ENCODE measurements at regions of chr10 and their contacts with region 1.

Region 1: DNA sequence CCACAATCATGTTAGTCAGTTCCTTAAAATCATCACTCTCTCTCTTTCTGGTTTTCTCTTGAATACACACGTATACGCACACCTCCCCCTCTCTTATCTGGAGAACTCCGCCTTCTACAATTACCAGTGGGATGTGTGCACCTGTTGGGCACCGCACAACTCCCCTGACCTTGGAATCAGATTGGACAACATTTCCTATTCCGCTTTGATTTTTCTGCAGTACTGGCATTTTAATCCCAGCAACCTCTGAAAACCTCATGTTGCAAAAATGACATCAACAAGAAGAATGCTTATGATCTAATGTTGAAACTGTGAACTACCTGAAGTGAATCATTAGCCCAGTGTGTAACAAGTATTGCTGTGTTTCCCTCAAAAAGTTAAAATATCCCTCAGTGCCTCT is 109.6 kb downstream of the KIAA1217 start:
- DNase-seq: no peak
- ATAC-seq: no peak
- H3K4me3 Mint-ChIP-seq: no peak overlapping the region
- H3K27ac Mint-ChIP-seq: no peak overlapping the region
- H3K4me1 Mint-ChIP-seq: peaks cover 6% of the 10 kb centered on the region
- H3K27me3 Mint-ChIP-seq: no peaks in the 10 kb centered on the region
- CTCF ChIP-seq: no peak

Region 2: GRCh38 chr10:24215196-24215595 is 103.3 kb before region 1 on chr10:
- CTCF ChIA-PET with region 1: no interaction called
- POLR2A ChIA-PET with region 1: no interaction called
- DNase-seq: no peak
- ATAC-seq: peak; percentile 29; the same call in 1 of the 2 replicates
- H3K4me3 Mint-ChIP-seq: no peak overlapping the region
- H3K27ac Mint-ChIP-seq: no peak overlapping the region; the same call in 1 of the 2 replicates
- H3K4me1 Mint-ChIP-seq: peaks cover 55% of the 10 kb centered on the region
- H3K27me3 Mint-ChIP-seq: no peaks in the 10 kb centered on the region
- CTCF ChIP-seq: no peak

Region 3: DNA sequence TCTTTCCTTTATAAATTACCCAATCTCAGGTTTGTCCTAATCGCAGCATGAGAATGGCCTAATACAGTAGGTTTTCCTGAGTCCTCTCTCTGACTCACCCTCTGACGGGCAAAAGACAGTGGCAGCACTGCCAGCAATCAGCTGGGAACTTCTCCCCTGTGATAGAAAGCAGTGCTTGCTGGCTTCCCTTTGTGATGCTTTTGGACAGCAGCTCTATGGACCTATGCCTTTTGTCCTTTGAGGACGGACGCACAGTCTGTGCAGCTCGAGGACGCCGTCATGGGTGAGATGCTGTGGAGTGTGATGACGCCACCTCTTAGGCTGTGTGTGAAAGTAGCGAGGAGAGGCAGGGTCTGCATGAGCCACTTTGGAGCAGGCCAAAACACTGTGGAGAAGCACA is 40.7 kb before region 1 on chr10:
- CTCF ChIA-PET with region 1: no interaction called
- POLR2A ChIA-PET with region 1: no interaction called
- DNase-seq: no peak
- ATAC-seq: no peak
- H3K4me3 Mint-ChIP-seq: no peak overlapping the region
- H3K27ac Mint-ChIP-seq: peak overlapping the region; percentile 78
- H3K4me1 Mint-ChIP-seq: peaks cover 5% of the 10 kb centered on the region; the same call in 1 of the 2 replicates
- H3K27me3 Mint-ChIP-seq: no peaks in the 10 kb centered on the region
- CTCF ChIP-seq: no peak

Region 4: DNA sequence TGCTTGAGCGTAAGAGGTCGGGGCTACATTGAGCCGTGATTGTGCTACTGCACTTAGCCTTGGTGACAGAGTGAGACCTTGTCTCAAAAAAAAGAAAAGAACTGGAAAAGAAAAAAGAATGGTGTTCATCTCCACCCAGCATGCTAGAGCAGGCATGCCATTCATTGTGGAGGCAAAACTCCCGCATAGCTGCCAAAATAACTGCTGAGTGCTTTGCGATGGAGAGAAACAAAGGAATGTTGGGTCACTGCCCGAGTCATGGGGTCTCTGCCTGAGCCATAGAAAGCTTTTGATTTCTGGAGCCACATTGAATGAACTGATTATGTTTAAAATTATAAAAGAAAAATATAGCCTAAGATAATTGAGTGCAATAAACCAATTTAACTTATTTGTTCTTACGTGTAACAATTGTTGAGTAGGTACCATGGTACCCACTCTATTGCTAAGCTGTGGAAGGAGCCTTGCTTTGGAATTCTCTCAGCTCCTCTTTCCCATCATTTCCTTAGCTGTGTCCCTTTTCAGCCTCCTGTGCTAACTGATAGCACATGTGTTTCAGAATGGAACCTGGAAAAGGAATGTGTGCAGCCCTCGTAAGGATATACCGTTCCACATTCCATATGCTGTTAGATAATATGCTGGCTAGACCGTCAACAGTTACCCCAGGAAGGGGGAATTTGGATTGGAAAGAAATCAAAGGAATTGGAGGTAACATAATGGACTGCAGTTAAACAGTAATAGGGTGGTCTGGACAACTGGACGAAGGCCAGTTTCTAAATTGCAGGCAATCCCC is 10.6 kb before region 1 on chr10:
- CTCF ChIA-PET with region 1: interaction called, 16 read pairs
- POLR2A ChIA-PET with region 1: no interaction called
- DNase-seq: no peak
- ATAC-seq: no peak
- H3K4me3 Mint-ChIP-seq: no peak overlapping the region
- H3K27ac Mint-ChIP-seq: no peak overlapping the region
- H3K4me1 Mint-ChIP-seq: peaks cover 24% of the 10 kb centered on the region
- H3K27me3 Mint-ChIP-seq: no peaks in the 10 kb centered on the region
- CTCF ChIP-seq: no peak

Region 5: DNA sequence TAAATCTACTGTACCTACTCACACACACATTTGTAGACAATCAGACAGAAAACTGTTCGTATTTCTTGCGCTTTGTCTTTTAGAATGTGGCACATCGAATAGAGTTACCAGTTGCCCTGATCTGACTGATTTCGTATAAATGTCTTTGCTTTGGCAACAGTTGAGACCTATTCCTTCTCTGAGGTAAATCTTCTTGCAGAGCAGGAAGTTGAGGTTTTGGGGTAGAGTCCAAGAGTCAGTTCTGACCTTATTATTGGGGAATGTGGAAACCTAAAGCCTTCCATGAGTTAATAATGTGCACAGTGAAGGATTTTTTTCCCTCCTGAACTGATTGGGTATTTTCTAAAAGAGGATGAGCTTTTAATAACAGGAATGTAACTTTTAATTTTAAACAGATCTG is 25.8 kb after region 1 on chr10:
- CTCF ChIA-PET with region 1: no interaction called
- POLR2A ChIA-PET with region 1: no interaction called
- DNase-seq: no peak
- ATAC-seq: no peak
- H3K4me3 Mint-ChIP-seq: no peak overlapping the region
- H3K27ac Mint-ChIP-seq: no peak overlapping the region
- H3K4me1 Mint-ChIP-seq: peaks cover 24% of the 10 kb centered on the region
- H3K27me3 Mint-ChIP-seq: no peaks in the 10 kb centered on the region
- CTCF ChIP-seq: no peak

Region 6: GRCh38 chr10:24456322-24456721 is 137.8 kb after region 1 on chr10:
- CTCF ChIA-PET with region 1: no interaction called
- POLR2A ChIA-PET with region 1: no interaction called
- DNase-seq: no peak
- ATAC-seq: no peak
- H3K4me3 Mint-ChIP-seq: no peak overlapping the region
- H3K27ac Mint-ChIP-seq: no peak overlapping the region
- H3K4me1 Mint-ChIP-seq: peaks cover 57% of the 10 kb centered on the region
- H3K27me3 Mint-ChIP-seq: no peaks in the 10 kb centered on the region
- CTCF ChIP-seq: no peak